Activated CD4-positive, alpha-beta memory T cell treated with anti-CD3 and anti-CD28 coated beads, Interleukin-2, amount 10 ng/mL, durations not matched to agents 7 days and 5 days (primary cell): ENCODE measurements at regions of chr17 and their contacts with region 1.

Region 1: DNA sequence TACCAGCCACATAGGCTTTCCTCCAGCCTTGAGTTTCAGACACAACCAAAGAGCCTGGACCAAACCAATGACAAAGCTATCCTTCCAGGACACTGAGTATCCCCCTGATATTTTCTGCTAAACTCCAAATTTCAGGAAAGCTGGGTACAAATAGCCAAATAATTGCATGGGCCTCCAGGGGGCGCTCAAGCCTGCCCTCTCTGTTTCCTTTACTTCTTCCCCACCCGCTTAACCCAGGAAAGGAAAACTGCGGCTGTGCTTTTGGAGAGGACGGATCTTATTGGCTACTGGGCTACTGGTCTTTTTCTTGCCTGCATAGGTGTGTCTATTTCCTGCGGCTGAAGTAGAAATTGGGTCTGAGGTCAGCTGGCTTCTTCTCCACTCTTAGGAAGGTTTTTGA is 30.1 kb downstream of the GNGT2 start:
- DNase-seq: peak; percentile 68
- H3K4me3 Mint-ChIP-seq: no peak overlapping the region
- H3K27ac Mint-ChIP-seq: no peak overlapping the region
- H3K4me1 Mint-ChIP-seq: peaks cover 7% of the 10 kb centered on the region
- H3K27me3 Mint-ChIP-seq: peaks cover 15% of the 10 kb centered on the region

Region 2: DNA sequence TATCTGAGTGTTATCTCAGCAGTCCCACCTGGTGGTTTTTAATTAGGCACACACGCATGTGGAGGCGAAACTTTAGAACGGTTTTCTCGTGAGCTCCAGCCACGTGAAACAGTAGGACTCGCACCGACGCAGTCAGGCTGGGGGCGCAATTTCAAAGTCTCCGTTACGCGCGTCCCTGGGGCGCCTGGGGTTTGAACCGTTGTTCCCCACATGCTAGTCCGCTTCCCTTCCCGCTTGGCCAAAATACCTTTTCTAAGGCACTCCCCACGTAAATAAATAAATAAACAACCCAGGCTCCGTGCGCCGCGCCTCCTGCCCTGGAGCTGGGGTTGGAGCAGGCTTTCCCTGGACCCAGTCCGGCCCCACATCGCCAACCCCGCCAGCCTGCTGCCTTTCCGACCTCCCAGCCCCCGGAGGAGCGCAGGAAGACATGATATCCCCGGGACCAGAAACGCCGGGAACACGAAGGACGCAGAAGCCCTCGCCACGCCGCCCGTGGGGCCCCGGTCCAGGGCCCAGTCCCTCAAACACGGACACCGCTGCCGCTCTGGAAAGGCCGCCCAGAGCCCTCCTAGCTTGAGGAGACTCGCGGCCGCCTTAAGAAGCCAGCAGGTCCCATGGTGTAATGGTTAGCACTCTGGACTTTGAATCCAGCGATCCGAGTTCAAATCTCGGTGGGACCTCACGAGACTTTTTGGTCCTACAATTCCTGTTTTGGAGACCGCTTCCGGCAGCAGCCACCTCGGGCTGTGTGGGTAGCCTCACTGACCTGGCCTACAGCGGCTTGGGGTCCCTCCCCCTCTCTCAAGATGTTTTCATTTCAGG is 11.8 kb after region 1 on chr17:
- CTCF ChIA-PET with region 1: interaction called, 36 read pairs
- POLR2A ChIA-PET with region 1: interaction called, 5 read pairs
- DNase-seq: peak; percentile 93
- H3K4me3 Mint-ChIP-seq: peak overlapping the region; percentile 90
- H3K27ac Mint-ChIP-seq: peak overlapping the region; percentile 100
- H3K4me1 Mint-ChIP-seq: peaks cover 57% of the 10 kb centered on the region
- H3K27me3 Mint-ChIP-seq: no peaks in the 10 kb centered on the region

Region 3: GRCh38 chr17:49223517-49224197 is 43.4 kb after region 1 on chr17:
- CTCF ChIA-PET with region 1: interaction called, 105 read pairs
- POLR2A ChIA-PET with region 1: interaction called, 18 read pairs
- DNase-seq: peak; percentile 67
- H3K4me3 Mint-ChIP-seq: peak overlapping the region; percentile 44
- H3K27ac Mint-ChIP-seq: no peak overlapping the region
- H3K4me1 Mint-ChIP-seq: peaks cover 48% of the 10 kb centered on the region
- H3K27me3 Mint-ChIP-seq: peaks cover 26% of the 10 kb centered on the region

Region 4: DNA sequence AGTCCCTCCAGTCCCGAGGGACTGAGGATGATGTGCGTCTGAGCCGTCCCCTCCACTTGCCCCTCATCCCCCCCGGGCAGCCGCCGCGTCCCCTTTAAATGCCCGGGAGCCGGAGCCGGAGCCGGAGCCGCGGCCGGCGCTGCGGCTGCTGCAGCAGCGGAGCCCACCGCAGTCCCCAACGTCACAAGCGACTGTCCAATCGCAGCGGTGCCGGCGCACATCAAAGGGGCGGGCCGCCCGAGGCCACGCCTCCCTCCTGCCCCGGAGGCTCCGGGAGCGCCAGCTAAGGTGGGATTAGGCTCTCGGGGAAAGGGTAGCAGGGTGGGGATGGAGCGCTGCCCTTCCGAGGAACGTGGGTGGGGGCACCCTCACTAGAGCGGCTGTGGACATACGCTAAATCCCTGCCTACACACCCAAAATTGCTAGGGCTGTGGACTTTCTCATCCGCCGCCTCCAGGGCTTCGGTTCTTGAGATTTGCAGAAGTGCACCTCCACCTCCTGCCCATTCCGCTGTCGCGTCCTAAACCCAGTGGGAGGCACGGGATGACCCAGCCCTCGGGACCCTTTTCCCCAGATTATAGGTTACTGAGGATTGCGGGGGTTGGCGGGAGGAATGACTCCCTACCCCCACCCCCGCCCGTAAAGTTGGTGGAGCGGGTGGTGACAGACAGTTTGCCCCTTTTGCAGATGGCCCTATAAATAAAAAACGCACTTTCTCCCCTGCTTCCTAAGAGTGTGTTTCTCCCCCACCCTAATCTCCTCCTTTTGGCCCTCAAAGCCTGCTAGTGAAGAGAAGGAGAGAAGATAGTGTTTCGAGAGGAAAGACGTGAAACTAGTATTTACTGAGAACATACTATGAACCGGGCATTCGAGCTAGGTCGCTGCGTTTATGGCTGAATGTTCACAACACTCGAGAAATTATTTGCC is 50.6 kb after region 1 on chr17 and contains the start of gene PHOSPHO1:
- CTCF ChIA-PET with region 1: interaction called, 105 read pairs
- POLR2A ChIA-PET with region 1: interaction called, 18 read pairs
- DNase-seq: peak; percentile 88
- H3K4me3 Mint-ChIP-seq: peak within 1 kb of the TSS; percentile 71
- H3K27ac Mint-ChIP-seq: no peak within 1 kb of the TSS
- H3K4me1 Mint-ChIP-seq: peaks cover 13% of the 10 kb centered on the region
- H3K27me3 Mint-ChIP-seq: peaks cover 28% of the 10 kb centered on the region
- total RNA-seq, gene PHOSPHO1: not detected

Region 5: GRCh38 chr17:49260011-49260921 is 80.0 kb after region 1 on chr17:
- CTCF ChIA-PET with region 1: interaction called, 10 read pairs
- POLR2A ChIA-PET with region 1: no interaction called
- DNase-seq: peak; percentile 49
- H3K4me3 Mint-ChIP-seq: peak overlapping the region; percentile 74
- H3K27ac Mint-ChIP-seq: no peak overlapping the region
- H3K4me1 Mint-ChIP-seq: peaks cover 13% of the 10 kb centered on the region
- H3K27me3 Mint-ChIP-seq: peaks cover 3% of the 10 kb centered on the region

Region 6: GRCh38 chr17:49290690-49291359 is 110.5 kb after region 1 on chr17:
- CTCF ChIA-PET with region 1: interaction called, 20 read pairs
- POLR2A ChIA-PET with region 1: no interaction called
- DNase-seq: no peak
- H3K4me3 Mint-ChIP-seq: no peak overlapping the region
- H3K27ac Mint-ChIP-seq: no peak overlapping the region
- H3K4me1 Mint-ChIP-seq: peaks cover 7% of the 10 kb centered on the region
- H3K27me3 Mint-ChIP-seq: no peaks in the 10 kb centered on the region